Tibial artery (tissue), 4 donors: ENCODE measurements at regions of chr5 and their contacts with region 1.

Region 1: DNA sequence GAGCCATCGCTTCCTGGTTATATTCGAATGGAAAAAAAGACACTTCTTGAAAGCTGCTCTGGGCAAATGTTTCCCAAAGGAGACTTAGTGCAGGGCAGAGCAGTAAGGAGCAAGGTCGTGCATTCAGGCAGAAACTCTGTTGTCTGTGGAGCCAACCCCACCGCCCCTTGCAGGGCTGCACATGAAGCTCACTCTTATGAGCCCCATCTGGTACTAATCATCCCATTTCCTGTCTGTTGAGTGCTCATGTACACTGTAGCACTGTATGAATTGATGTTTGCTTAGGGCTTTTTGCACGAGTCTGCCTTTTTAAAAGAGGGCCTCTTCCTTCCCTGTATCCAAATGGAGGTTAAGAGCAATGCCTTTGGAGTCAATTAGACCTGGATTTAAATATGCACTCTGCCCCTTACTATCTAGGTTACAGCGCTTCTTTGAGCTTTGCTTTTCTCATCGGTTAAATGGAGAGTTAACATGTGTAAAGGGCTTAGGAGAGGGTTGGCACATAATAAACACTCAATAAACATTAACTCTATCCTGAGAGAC is 25.4 kb downstream of the HMHB1 start:
- DNase-seq: no peak
- H3K4me3 ChIP-seq: no peak overlapping the region
- H3K27ac ChIP-seq: no peak overlapping the region
- H3K4me1 ChIP-seq: no peaks in the 10 kb centered on the region
- H3K27me3 ChIP-seq: no peaks in the 10 kb centered on the region
- CTCF ChIP-seq: no peak

Region 2: GRCh38 chr5:143554187-143554717 is 283.1 kb before region 1 on chr5:
- intact Hi-C with region 1: no loop called
- DNase-seq: no peak
- H3K4me3 ChIP-seq: no peak overlapping the region
- H3K27ac ChIP-seq: no peak overlapping the region
- H3K4me1 ChIP-seq: peaks cover 0 to 20% (median 0%) of the 10 kb centered on the region in 4 donors
- H3K27me3 ChIP-seq: no peaks in the 10 kb centered on the region
- CTCF ChIP-seq: no peak

Region 3: GRCh38 chr5:143641549-143642356 is 195.6 kb before region 1 on chr5:
- intact Hi-C with region 1: no loop called
- DNase-seq: no peak
- H3K4me3 ChIP-seq: no peak overlapping the region
- H3K27ac ChIP-seq: no peak overlapping the region
- H3K4me1 ChIP-seq: peaks cover 0 to 22% (median 2%) of the 10 kb centered on the region in 4 donors
- H3K27me3 ChIP-seq: no peaks in the 10 kb centered on the region
- CTCF ChIP-seq: no peak

Region 4: GRCh38 chr5:144142139-144142823 is 304.9 kb after region 1 on chr5:
- intact Hi-C with region 1: loop called (anchors 10 kb)
- DNase-seq: no peak
- H3K4me3 ChIP-seq: no peak overlapping the region
- H3K27ac ChIP-seq: no peak overlapping the region
- H3K4me1 ChIP-seq: peaks cover 0 to 10% (median 0%) of the 10 kb centered on the region in 4 donors
- H3K27me3 ChIP-seq: no peaks in the 10 kb centered on the region
- CTCF ChIP-seq: peak; percentile 54 to 56